ENCODE measurements at regions of chr1 and their contacts with region 1.

Region 1: GRCh38 chr1:67489643-67490042 is 59.4 kb upstream of the SERBP1 start:
- DNase-seq: no peak
- H3K4me3 ChIP-seq: no peak overlapping the region
- H3K27ac ChIP-seq: no peak overlapping the region
- H3K4me1 ChIP-seq: peaks cover 0 to 8% (median 0%) of the 10 kb centered on the region in 4 donors
- H3K27me3 ChIP-seq: no peaks in the 10 kb centered on the region
- CTCF ChIP-seq: no peak
- EP300 ChIP-seq: no peak
- POLR2A ChIP-seq: no peak

Region 2: GRCh38 chr1:66764994-66765578 is 724.6 kb before region 1 on chr1:
- in situ Hi-C with region 1: loop called in 3 of 4 experiments (anchors 10 to 25 kb)
- intact Hi-C with region 1: no loop called
- DNase-seq: peak; percentile 30
- H3K4me3 ChIP-seq: no peak overlapping the region
- H3K27ac ChIP-seq: no peak overlapping the region
- H3K4me1 ChIP-seq: no peaks in the 10 kb centered on the region
- H3K27me3 ChIP-seq: no peaks in the 10 kb centered on the region
- CTCF ChIP-seq: peak; percentile 64 to 77 (median 71)
- EP300 ChIP-seq: no peak
- POLR2A ChIP-seq: no peak

Region 3: DNA sequence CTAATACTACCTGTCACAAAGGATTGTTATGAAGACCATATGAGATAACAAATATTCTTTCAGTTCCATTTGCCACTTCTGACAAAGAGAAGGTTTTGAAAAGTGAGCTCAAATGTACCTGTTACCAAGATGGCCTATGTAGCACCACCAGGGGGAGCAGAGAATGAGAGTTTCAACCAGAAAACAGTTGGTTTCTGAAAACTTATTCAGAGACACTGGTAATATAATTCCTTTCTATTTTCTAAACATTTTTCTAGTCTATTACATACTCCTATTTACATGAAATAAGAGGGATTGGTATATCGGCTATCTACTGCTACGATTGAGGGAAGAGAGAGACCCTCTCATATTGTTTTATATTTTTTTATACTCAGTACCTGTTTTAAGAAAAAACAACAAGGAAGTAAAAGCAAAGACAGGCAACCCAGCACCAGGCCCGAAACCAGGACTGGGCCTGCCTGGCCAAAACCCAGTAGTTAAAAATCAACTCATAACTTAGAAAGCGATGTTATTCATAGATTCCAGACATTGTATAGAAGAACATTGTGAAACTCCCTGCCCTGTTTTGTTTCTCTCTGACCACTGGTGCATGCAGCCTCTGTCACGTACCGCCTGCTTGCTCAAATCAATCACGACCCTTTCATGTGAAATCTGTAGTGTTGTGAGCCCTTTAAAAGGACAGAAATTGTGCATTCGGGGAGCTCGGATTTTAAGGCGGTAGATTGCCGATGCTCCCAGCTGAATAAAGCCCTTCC is 275.0 kb before region 1 on chr1:
- in situ Hi-C with region 1: loop called in 1 of 4 experiments (anchors 10 kb)
- intact Hi-C with region 1: no loop called
- DNase-seq: peak; percentile 29
- H3K4me3 ChIP-seq: no peak overlapping the region
- H3K27ac ChIP-seq: no peak overlapping the region
- H3K4me1 ChIP-seq: no peaks in the 10 kb centered on the region
- H3K27me3 ChIP-seq: no peaks in the 10 kb centered on the region
- CTCF ChIP-seq: peak in 4 of 5 experiments; percentile 32 to 40 (median 38)
- EP300 ChIP-seq: no peak
- POLR2A ChIP-seq: no peak

Region 4: DNA sequence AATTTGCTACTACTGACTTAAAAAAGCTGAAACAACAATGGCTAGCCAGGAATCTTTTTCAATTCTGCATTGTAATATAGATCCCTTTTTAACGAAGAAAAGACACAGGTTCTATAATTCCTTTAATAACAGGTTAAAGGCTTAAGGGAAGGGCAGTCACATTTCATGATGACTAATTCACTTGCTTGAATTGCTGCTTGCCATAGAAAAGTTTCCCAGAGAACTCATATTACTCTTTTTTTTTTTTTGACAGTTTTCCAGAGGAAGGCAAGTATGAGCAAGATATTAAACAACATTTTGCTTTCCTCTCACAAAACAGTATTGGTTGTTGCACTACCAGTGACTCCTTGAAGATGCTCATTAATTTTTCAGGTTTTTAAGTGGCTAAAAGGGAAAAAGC is 262.4 kb before region 1 on chr1:
- in situ Hi-C with region 1: loop called in 1 of 4 experiments (anchors 10 kb)
- intact Hi-C with region 1: no loop called
- DNase-seq: no peak
- H3K4me3 ChIP-seq: no peak overlapping the region
- H3K27ac ChIP-seq: no peak overlapping the region
- H3K4me1 ChIP-seq: no peaks in the 10 kb centered on the region
- H3K27me3 ChIP-seq: no peaks in the 10 kb centered on the region
- CTCF ChIP-seq: no peak
- EP300 ChIP-seq: no peak
- POLR2A ChIP-seq: no peak

Region 5: GRCh38 chr1:67347688-67348472 is 141.8 kb before region 1 on chr1:
- in situ Hi-C with region 1: loop called in 1 of 4 experiments (anchors 10 kb)
- intact Hi-C with region 1: no loop called
- DNase-seq: peak; percentile 12
- H3K4me3 ChIP-seq: no peak overlapping the region
- H3K27ac ChIP-seq: no peak overlapping the region
- H3K4me1 ChIP-seq: no peaks in the 10 kb centered on the region
- H3K27me3 ChIP-seq: no peaks in the 10 kb centered on the region
- CTCF ChIP-seq: peak; percentile 47 to 64 (median 57)
- EP300 ChIP-seq: no peak
- POLR2A ChIP-seq: no peak

Region 6: DNA sequence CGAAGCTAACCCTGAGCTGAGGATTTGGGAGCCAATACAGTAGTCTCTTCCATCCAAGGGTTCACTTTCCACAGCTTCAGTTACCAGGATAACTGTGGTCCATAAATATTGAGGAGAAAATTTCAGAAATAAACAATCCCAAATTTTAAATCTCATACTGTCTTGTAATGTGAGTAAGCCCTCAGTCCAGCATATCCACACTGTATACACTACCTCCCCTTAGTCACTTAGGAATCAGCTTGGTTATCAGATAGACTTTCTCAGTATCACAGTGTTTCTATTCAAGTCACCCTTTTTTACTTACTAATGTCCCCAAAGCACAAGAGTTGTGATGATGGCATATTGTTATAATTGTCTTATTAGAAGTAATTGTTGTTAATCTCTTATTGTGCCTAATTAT is 445.9 kb after region 1 on chr1:
- in situ Hi-C with region 1: no loop called
- intact Hi-C with region 1: no loop called
- DNase-seq: no peak
- H3K4me3 ChIP-seq: no peak overlapping the region
- H3K27ac ChIP-seq: no peak overlapping the region
- H3K4me1 ChIP-seq: no peaks in the 10 kb centered on the region
- H3K27me3 ChIP-seq: no peaks in the 10 kb centered on the region
- CTCF ChIP-seq: no peak
- EP300 ChIP-seq: no peak
- POLR2A ChIP-seq: no peak

Region 7: GRCh38 chr1:68145418-68146126 is 655.9 kb after region 1 on chr1:
- in situ Hi-C with region 1: no loop called
- intact Hi-C with region 1: no loop called
- DNase-seq: peak; percentile 64
- H3K4me3 ChIP-seq: no peak overlapping the region
- H3K27ac ChIP-seq: peak overlapping the region; percentile 34 to 69 (median 60)
- H3K4me1 ChIP-seq: peaks cover 5 to 48% (median 19%) of the 10 kb centered on the region in 4 donors
- H3K27me3 ChIP-seq: no peaks in the 10 kb centered on the region
- CTCF ChIP-seq: no peak
- EP300 ChIP-seq: no peak
- POLR2A ChIP-seq: no peak